ENCODE measurements at regions of chr9 and their contacts with region 1.

Region 1: DNA sequence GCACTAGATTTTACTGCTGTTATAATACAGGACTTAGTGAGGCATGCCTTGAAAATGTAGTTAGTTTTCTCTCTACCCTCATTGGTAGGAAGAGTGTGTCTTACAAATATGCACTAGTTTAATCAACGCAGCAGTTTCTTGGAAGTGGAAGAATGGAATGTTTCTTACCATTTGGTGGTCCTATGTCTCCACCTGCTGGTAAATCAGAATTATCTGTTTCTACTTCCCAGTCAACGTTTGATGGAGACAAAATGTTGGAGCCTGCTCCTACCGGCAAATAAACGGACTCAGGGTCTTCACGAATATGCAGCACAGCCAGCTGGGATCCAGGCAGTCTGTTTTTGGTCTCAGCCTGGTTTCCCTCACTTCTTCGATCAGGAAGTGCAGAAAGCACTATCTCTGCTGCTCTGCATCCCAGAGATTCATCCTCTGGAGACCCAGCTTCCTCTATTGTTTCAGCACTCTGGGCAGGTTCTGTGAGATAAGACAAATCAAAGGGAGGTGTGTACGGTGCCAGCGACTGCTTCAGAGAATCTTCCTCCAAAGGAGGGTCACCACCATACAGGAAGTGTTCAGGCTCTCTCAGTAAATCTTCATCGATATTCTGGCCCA is 59.5 kb upstream of the PCA3 start:
- DNase-seq: no peak
- H3K4me3 Mint-ChIP-seq: no peak overlapping the region
- H3K27ac Mint-ChIP-seq: no peak overlapping the region
- H3K4me1 Mint-ChIP-seq: peaks cover 10% of the 10 kb centered on the region
- H3K27me3 Mint-ChIP-seq: peaks cover 36% of the 10 kb centered on the region

Region 2: GRCh38 chr9:76451234-76451633 is 253.5 kb before region 1 on chr9:
- CTCF ChIA-PET with region 1: interaction called, 50 read pairs
- POLR2A ChIA-PET with region 1: no interaction called
- intact Hi-C with region 1: loop called (anchors 1 kb)
- DNase-seq: no peak
- H3K4me3 Mint-ChIP-seq: no peak overlapping the region
- H3K27ac Mint-ChIP-seq: no peak overlapping the region
- H3K4me1 Mint-ChIP-seq: peaks cover 6% of the 10 kb centered on the region
- H3K27me3 Mint-ChIP-seq: no peaks in the 10 kb centered on the region

Region 3: GRCh38 chr9:76592091-76593010 is 112.3 kb before region 1 on chr9:
- CTCF ChIA-PET with region 1: no interaction called
- POLR2A ChIA-PET with region 1: no interaction called
- intact Hi-C with region 1: no loop called
- DNase-seq: no peak
- H3K4me3 Mint-ChIP-seq: no peak overlapping the region
- H3K27ac Mint-ChIP-seq: no peak overlapping the region
- H3K4me1 Mint-ChIP-seq: peaks cover 5% of the 10 kb centered on the region
- H3K27me3 Mint-ChIP-seq: peaks cover 7% of the 10 kb centered on the region

Region 4: GRCh38 chr9:76658535-76659231 is 46.0 kb before region 1 on chr9:
- CTCF ChIA-PET with region 1: interaction called, 5 read pairs
- POLR2A ChIA-PET with region 1: no interaction called
- intact Hi-C with region 1: loop called (anchors 1 kb)
- DNase-seq: no peak
- H3K4me3 Mint-ChIP-seq: no peak overlapping the region
- H3K27ac Mint-ChIP-seq: no peak overlapping the region
- H3K4me1 Mint-ChIP-seq: peaks cover 29% of the 10 kb centered on the region
- H3K27me3 Mint-ChIP-seq: peaks cover 1% of the 10 kb centered on the region

Region 5: GRCh38 chr9:76691517-76692313 is 13.0 kb before region 1 on chr9:
- CTCF ChIA-PET with region 1: interaction called, 10 read pairs
- POLR2A ChIA-PET with region 1: no interaction called
- intact Hi-C with region 1: no loop called
- DNase-seq: peak; percentile 27
- H3K4me3 Mint-ChIP-seq: peak overlapping the region; percentile 68
- H3K27ac Mint-ChIP-seq: no peak overlapping the region
- H3K4me1 Mint-ChIP-seq: peaks cover 18% of the 10 kb centered on the region
- H3K27me3 Mint-ChIP-seq: peaks cover 43% of the 10 kb centered on the region